MCF 10A (cell line): ENCODE measurements at regions of chr4 and their contacts with region 1.

Region 1: GRCh38 chr4:36244257-36245079 is at the start of gene ARAP2:
- DNase-seq: peak; percentile 62
- H3K4me3 Mint-ChIP-seq: peak within 1 kb of the TSS; percentile 90
- H3K27ac Mint-ChIP-seq: peak within 1 kb of the TSS; percentile 92
- H3K4me1 Mint-ChIP-seq: peaks cover 16% of the 10 kb centered on the region
- H3K27me3 Mint-ChIP-seq: no peaks in the 10 kb centered on the region
- CTCF ChIP-seq: no peak
- total RNA-seq, gene ARAP2: 10.9 and 12.0 TPM in 2 replicates

Region 2: GRCh38 chr4:36233567-36234266 is 10.8 kb before region 1 on chr4:
- CTCF ChIA-PET with region 1: interaction called, 11 read pairs
- POLR2A ChIA-PET with region 1: interaction called, 68 read pairs
- intact Hi-C with region 1: no loop called
- DNase-seq: no peak
- H3K4me3 Mint-ChIP-seq: no peak overlapping the region
- H3K27ac Mint-ChIP-seq: no peak overlapping the region
- H3K4me1 Mint-ChIP-seq: peaks cover 11% of the 10 kb centered on the region
- H3K27me3 Mint-ChIP-seq: no peaks in the 10 kb centered on the region
- CTCF ChIP-seq: no peak

Region 3: DNA sequence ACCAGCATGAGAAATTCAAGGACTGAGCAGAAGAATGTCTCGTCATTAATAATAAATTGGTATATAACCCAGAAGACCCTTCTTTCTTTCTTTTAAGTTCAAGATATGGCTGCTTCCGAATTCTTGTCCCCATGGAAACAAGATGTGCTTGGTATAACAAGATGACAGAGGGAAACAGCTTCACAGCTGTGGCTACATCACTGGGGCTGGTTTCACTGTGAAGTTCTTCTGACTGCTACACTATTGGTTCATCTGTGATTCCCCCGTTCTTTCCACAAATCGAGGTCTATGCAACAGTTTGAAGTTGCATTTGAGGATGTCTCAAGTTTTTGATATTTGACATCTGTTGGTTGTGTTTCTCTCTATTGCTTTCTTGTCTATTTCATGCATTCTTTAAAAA is 24.6 kb after region 1 on chr4:
- CTCF ChIA-PET with region 1: interaction called, 6 read pairs
- POLR2A ChIA-PET with region 1: interaction called, 48 read pairs
- intact Hi-C with region 1: no loop called
- DNase-seq: no peak
- H3K4me3 Mint-ChIP-seq: no peak overlapping the region
- H3K27ac Mint-ChIP-seq: no peak overlapping the region
- H3K4me1 Mint-ChIP-seq: peaks cover 9% of the 10 kb centered on the region
- H3K27me3 Mint-ChIP-seq: no peaks in the 10 kb centered on the region
- CTCF ChIP-seq: no peak

Region 4: DNA sequence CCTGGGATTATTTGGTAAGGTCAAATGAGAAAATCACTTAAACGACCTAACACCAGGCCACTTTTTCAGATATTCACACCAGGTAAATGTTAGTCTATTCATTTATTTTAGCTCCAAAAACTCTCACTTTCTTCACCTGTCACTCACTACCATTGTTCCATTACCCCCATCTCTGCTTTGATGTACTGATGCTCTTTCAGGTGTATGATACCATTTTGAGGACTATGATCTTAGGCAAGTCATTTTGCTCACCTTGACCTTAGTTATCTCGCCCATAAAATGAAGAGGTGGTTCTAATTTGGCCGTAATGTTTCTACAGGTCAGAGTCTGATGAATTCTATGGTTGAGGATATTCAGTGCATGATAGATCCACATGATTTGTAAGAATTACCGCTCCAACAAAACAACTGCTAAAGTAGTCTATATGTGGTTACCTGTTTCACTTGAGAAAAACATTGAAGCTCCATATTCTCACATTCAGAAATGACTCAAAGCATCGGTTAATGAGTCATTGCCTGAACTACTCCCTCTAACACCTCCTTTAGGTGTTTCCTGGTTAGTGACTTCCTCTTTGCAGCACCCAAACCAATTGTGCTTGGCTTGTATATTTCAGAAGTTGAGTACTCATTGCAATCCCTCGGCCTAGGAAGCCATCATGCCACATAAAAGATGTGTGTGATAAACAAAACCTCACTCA is 41.5 kb after region 1 on chr4:
- CTCF ChIA-PET with region 1: interaction called, 18 read pairs
- POLR2A ChIA-PET with region 1: interaction called, 38 read pairs
- intact Hi-C with region 1: no loop called
- DNase-seq: peak; percentile 53
- H3K4me3 Mint-ChIP-seq: no peak overlapping the region
- H3K27ac Mint-ChIP-seq: peak overlapping the region; percentile 64
- H3K4me1 Mint-ChIP-seq: peaks cover 22% of the 10 kb centered on the region
- H3K27me3 Mint-ChIP-seq: no peaks in the 10 kb centered on the region
- CTCF ChIP-seq: no peak